ENCODE measurements at regions of chr2 and their contacts with region 1.

Region 1: GRCh38 chr2:138209009-138209408 is 244.7 kb downstream of the HNMT start:
- DNase-seq: no peak
- ATAC-seq: no peak
- H3K4me3 ChIP-seq: no peak overlapping the region
- H3K27ac ChIP-seq: no peak overlapping the region
- H3K4me1 ChIP-seq: no peaks in the 10 kb centered on the region
- H3K27me3 ChIP-seq: no peaks in the 10 kb centered on the region
- CTCF ChIP-seq: no peak
- POLR2A ChIP-seq: no peak
- RAD21 ChIP-seq: no peak

Region 2: DNA sequence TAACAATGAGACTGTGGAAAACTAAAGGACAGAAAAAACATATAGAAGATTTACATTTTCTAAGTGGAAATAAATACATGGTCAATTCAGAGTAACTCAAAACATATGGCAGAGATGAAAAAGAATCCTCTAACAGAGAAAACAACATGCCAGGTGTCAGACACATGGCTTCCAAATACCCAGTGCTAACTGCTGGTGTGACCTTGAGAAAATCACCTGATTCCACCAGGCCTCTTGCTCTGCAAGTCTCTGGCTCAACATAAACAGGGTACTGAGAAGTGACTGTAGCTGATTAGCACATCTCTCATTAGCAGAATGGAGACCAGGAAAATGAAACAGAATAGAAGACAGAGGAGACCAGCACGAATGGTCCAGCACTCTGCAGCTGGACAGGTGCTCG is 33.9 kb before region 1 on chr2:
- CTCF ChIA-PET with region 1: no interaction called
- POLR2A ChIA-PET with region 1: no interaction called
- dilution Hi-C with region 1: no loop called
- in situ Hi-C with region 1: no loop called
- intact Hi-C with region 1: no loop called
- DNase-seq: no peak
- ATAC-seq: no peak
- H3K4me3 ChIP-seq: no peak overlapping the region
- H3K27ac ChIP-seq: no peak overlapping the region
- H3K4me1 ChIP-seq: no peaks in the 10 kb centered on the region
- H3K27me3 ChIP-seq: no peaks in the 10 kb centered on the region
- CTCF ChIP-seq: no peak
- POLR2A ChIP-seq: no peak
- RAD21 ChIP-seq: no peak

Region 3: DNA sequence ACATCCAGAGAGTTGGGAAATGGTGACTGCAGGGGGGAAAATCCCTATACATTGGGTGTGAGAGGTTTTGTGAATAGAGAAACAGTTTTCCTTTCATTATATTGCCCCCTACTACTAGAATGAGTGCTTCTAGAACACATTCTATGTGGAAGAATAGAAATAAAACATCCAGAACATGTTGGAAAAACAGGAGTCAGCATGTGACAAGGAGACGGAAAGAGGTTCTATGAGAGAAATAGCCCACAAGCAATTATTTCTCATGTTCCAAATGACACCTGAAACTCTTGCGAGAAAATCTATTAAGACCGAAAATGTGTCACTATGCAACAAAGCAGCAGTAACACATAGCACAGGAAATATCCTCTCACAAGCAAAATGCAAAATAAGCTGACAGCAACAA is 89.9 kb after region 1 on chr2:
- CTCF ChIA-PET with region 1: no interaction called
- POLR2A ChIA-PET with region 1: no interaction called
- dilution Hi-C with region 1: no loop called
- in situ Hi-C with region 1: no loop called
- intact Hi-C with region 1: loop called (anchors 5 kb)
- DNase-seq: no peak
- ATAC-seq: no peak
- H3K4me3 ChIP-seq: no peak overlapping the region
- H3K27ac ChIP-seq: no peak overlapping the region
- H3K4me1 ChIP-seq: no peaks in the 10 kb centered on the region
- H3K27me3 ChIP-seq: no peaks in the 10 kb centered on the region
- CTCF ChIP-seq: no peak
- POLR2A ChIP-seq: no peak
- RAD21 ChIP-seq: no peak

Region 4: GRCh38 chr2:138389063-138389462 is 180.1 kb after region 1 on chr2:
- CTCF ChIA-PET with region 1: no interaction called
- POLR2A ChIA-PET with region 1: no interaction called
- dilution Hi-C with region 1: no loop called
- in situ Hi-C with region 1: no loop called
- intact Hi-C with region 1: loop called (anchors 5 kb)
- DNase-seq: no peak
- ATAC-seq: no peak
- H3K4me3 ChIP-seq: no peak overlapping the region
- H3K27ac ChIP-seq: no peak overlapping the region
- H3K4me1 ChIP-seq: no peaks in the 10 kb centered on the region
- H3K27me3 ChIP-seq: no peaks in the 10 kb centered on the region
- CTCF ChIP-seq: no peak
- POLR2A ChIP-seq: no peak
- RAD21 ChIP-seq: no peak

Region 5: DNA sequence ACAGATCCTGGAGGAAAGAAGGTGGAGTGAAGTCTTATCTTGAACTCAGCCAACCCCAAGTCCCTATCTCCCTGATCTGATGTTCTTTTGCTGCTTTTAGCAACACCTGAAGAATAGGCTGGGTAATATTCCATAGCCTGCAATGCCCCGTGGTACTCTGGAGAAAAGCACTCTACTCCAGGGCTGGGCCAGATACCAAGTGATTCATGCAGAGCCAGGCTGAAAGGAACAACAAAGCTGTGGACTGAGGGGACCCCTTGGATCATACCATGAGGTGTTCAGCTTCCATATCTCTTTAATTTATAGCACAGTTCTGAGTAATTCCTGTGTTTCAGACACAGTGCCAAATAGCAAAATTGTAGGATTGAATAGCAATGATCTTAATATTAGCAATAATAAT is 440.6 kb after region 1 on chr2:
- CTCF ChIA-PET with region 1: no interaction called
- POLR2A ChIA-PET with region 1: no interaction called
- dilution Hi-C with region 1: no loop called
- in situ Hi-C with region 1: no loop called
- intact Hi-C with region 1: no loop called
- DNase-seq: no peak
- ATAC-seq: no peak
- H3K4me3 ChIP-seq: no peak overlapping the region
- H3K27ac ChIP-seq: no peak overlapping the region
- H3K4me1 ChIP-seq: no peaks in the 10 kb centered on the region
- H3K27me3 ChIP-seq: no peaks in the 10 kb centered on the region
- CTCF ChIP-seq: no peak
- POLR2A ChIP-seq: no peak
- RAD21 ChIP-seq: no peak